ENCODE measurements at regions of chr3 and their contacts with region 1.

Region 1: GRCh38 chr3:27712136-27713077 is 9.7 kb downstream of the EOMES start:
- DNase-seq: peak; percentile 75 to 83
- H3K4me3 ChIP-seq: peak overlapping the region; percentile 51 to 54
- H3K27ac ChIP-seq: peak overlapping the region in 1 of 2 donors; percentile 8
- H3K4me1 ChIP-seq: peaks cover 0 to 36% (median 28%) of the 10 kb centered on the region in 4 donors
- H3K27me3 ChIP-seq: peaks cover 0 to 45% of the 10 kb centered on the region in 2 donors
- CTCF ChIP-seq: peak; percentile 70 to 72

Region 2: DNA sequence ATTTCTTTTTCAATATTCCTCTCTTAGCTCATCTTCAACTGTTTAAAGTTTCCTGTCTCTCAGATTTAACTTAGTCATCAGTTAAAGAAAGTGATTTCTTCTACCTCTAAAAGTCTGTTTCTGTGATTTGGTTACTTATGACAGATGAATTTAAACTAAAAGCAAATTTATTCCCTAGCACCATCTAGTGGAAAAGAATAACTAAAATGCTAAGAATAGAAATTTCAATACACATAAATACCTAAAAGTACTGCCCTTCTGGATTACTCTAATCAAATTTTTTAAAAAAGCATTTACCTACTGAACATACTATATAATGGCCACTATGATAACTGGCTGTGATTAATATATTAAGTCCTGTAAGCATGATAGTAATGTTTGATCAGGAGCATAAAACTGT is 622.1 kb after region 1 on chr3:
- intact Hi-C with region 1: loop called (anchors 5 kb)
- DNase-seq: no peak
- H3K4me3 ChIP-seq: no peak overlapping the region
- H3K27ac ChIP-seq: no peak overlapping the region
- H3K4me1 ChIP-seq: no peaks in the 10 kb centered on the region
- H3K27me3 ChIP-seq: no peaks in the 10 kb centered on the region
- CTCF ChIP-seq: no peak

Region 3: GRCh38 chr3:28637742-28638141 is 925.3 kb after region 1 on chr3:
- intact Hi-C with region 1: no loop called
- DNase-seq: no peak
- H3K4me3 ChIP-seq: no peak overlapping the region
- H3K27ac ChIP-seq: no peak overlapping the region
- H3K4me1 ChIP-seq: no peaks in the 10 kb centered on the region
- H3K27me3 ChIP-seq: no peaks in the 10 kb centered on the region
- CTCF ChIP-seq: no peak